Activated CD4-positive, alpha-beta memory T cell treated with anti-CD3 and anti-CD28 coated beads, Interleukin-2, amount 10 ng/mL, durations not matched to agents 7 days and 5 days (primary cell): ENCODE measurements at regions of chr12 and their contacts with region 1.

Region 1: GRCh38 chr12:49553512-49554088 is 14.3 kb downstream of the MCRS1 start:
- DNase-seq: no peak
- H3K4me3 Mint-ChIP-seq: no peak overlapping the region
- H3K27ac Mint-ChIP-seq: no peak overlapping the region
- H3K4me1 Mint-ChIP-seq: peaks cover 8% of the 10 kb centered on the region
- H3K27me3 Mint-ChIP-seq: peaks cover 30% of the 10 kb centered on the region

Region 2: DNA sequence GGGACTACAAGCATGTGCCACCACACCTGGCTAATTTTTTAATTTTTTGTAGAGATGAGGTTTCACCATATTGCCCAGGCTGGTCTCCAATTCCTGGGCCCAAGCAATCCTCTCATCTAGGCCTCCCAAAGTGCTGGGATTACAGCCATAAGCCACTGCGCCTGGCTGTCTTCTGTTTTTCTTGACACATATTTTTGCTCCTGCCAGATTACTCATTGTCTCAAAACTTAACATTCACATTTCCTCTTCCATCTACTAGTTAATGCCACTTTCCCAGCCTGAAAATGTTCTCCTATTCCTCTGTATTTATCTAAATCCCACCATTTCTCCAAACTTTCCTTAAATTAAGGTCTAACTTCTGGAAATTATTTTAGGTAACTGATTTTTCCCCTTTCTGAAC is 51.0 kb before region 1 on chr12:
- CTCF ChIA-PET with region 1: no interaction called
- POLR2A ChIA-PET with region 1: no interaction called
- DNase-seq: no peak
- H3K4me3 Mint-ChIP-seq: no peak overlapping the region
- H3K27ac Mint-ChIP-seq: no peak overlapping the region
- H3K4me1 Mint-ChIP-seq: peaks cover 1% of the 10 kb centered on the region
- H3K27me3 Mint-ChIP-seq: no peaks in the 10 kb centered on the region

Region 3: DNA sequence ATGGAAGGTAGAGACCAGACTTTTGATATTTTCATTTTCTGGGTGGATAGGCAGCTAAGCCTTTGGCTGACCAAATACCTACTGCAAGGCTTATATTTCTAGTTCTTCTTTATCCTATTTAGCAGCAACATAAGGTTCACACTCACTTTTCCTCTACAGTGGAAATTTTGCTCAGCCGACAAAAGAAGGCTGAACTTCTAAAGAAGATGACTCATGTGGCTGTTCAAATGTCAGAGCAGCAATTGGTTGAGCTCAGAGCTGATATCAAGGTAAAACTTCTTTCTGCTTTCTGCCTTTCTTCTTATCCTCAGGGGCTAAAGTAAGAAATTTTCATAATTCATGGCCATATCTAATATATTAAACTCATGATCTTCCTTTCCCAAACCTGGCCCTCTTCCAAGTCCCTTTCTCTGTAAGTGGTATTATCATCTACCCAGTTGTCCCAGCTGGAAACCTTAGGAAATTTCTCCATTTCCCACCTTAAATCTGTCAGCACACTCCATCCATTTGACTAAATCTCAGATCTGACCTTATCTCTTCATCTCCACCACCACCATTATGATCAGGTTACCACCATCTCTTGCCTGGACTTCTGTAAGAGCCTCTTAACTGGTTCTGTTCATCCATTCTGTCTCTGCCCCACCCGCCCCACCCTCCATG is 34.6 kb before region 1 on chr12:
- CTCF ChIA-PET with region 1: no interaction called
- POLR2A ChIA-PET with region 1: no interaction called
- DNase-seq: no peak
- H3K4me3 Mint-ChIP-seq: no peak overlapping the region
- H3K27ac Mint-ChIP-seq: no peak overlapping the region
- H3K4me1 Mint-ChIP-seq: peaks cover 1% of the 10 kb centered on the region
- H3K27me3 Mint-ChIP-seq: no peaks in the 10 kb centered on the region

Region 4: GRCh38 chr12:49538510-49539403 is 14.8 kb before region 1 on chr12 and contains the start of gene KCNH3:
- CTCF ChIA-PET with region 1: interaction called, 4 read pairs
- POLR2A ChIA-PET with region 1: interaction called, 11 read pairs
- DNase-seq: peak; percentile 93
- H3K4me3 Mint-ChIP-seq: peak within 1 kb of the TSS; percentile 60
- H3K27ac Mint-ChIP-seq: no peak within 1 kb of the TSS
- H3K4me1 Mint-ChIP-seq: peaks cover 26% of the 10 kb centered on the region
- H3K27me3 Mint-ChIP-seq: peaks cover 49% of the 10 kb centered on the region
- total RNA-seq, gene KCNH3: 0.58 to 0.90 TPM

Region 5: DNA sequence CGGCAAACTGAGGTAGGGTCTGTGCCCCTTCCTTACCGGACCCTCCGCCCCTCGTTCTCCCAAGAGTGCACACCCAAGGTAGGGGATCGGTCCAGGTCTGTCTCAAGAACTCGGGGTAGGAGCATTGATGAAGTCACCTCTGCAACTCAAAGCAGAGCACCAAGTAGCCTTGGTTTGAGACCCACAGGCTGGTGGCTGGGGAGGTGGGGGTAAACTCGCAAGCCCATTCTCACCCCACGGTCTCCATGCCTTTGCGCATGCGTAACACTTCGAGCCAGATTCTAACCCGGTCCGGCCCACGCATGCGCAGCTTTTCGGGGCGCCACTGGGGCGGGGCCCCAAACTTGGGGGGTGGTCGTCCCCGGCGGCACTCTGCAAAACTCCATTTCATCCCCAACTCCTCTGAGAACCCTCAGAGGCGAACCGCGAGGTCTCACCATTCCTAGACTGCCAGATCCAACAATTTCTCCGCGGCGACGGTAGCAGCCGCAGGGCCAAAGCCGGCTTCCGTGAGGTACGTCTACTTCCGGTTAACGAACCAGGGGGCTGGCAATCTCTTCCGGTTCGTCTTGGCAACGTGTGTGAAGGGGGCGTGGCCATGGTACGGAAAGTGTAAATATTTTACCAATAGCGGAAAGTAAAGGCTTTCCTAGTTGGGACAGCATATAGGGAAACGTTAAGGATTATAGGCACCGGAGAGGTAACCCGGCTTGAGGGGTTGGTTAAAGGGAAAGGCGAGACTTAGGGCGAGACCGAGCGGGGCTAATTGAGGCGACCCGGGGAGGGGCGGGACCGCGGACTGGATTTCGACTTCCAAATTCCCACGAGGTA is 14.2 kb after region 1 on chr12 and contains the start of gene MCRS1:
- CTCF ChIA-PET with region 1: interaction called, 21 read pairs
- POLR2A ChIA-PET with region 1: interaction called, 76 read pairs
- DNase-seq: peak; percentile 90
- H3K4me3 Mint-ChIP-seq: peak within 1 kb of the TSS; percentile 97
- H3K27ac Mint-ChIP-seq: peak within 1 kb of the TSS; percentile 89
- H3K4me1 Mint-ChIP-seq: peaks cover 65% of the 10 kb centered on the region
- H3K27me3 Mint-ChIP-seq: no peaks in the 10 kb centered on the region
- total RNA-seq, gene MCRS1: 70.5 to 73.1 TPM

Region 6: GRCh38 chr12:49662998-49663843 is 109.6 kb after region 1 on chr12:
- CTCF ChIA-PET with region 1: no interaction called
- POLR2A ChIA-PET with region 1: no interaction called
- DNase-seq: peak; percentile 82
- H3K4me3 Mint-ChIP-seq: peak overlapping the region; percentile 56
- H3K27ac Mint-ChIP-seq: peak overlapping the region; percentile 95
- H3K4me1 Mint-ChIP-seq: peaks cover 60% of the 10 kb centered on the region
- H3K27me3 Mint-ChIP-seq: no peaks in the 10 kb centered on the region